ENCODE measurements at regions of chr20 and their contacts with region 1.

Region 1: GRCh38 chr20:45971675-45972499 is at the start of gene ZNF335:
- DNase-seq: peak; percentile 76 to 97
- H3K4me3 ChIP-seq: peak within 1 kb of the TSS; percentile 73 to 99
- H3K27ac ChIP-seq: peak within 1 kb of the TSS; percentile 99
- H3K4me1 ChIP-seq: peaks cover 3 to 30% of the 10 kb centered on the region in 2 donors
- H3K27me3 ChIP-seq: no peaks in the 10 kb centered on the region
- CTCF ChIP-seq: peak; percentile 37 to 48 (median 45)
- total RNA-seq, gene ZNF335: 27.8 TPM

Region 2: GRCh38 chr20:45406259-45407066 is 565.4 kb before region 1 on chr20:
- intact Hi-C with region 1: loop called (anchors 10 kb)
- DNase-seq: peak; percentile 38 to 90
- H3K4me3 ChIP-seq: peak overlapping the region; percentile 81 to 98
- H3K27ac ChIP-seq: peak overlapping the region; percentile 95 to 99
- H3K4me1 ChIP-seq: peaks cover 9 to 20% of the 10 kb centered on the region in 2 donors
- H3K27me3 ChIP-seq: no peaks in the 10 kb centered on the region
- CTCF ChIP-seq: no peak

Region 3: GRCh38 chr20:45857114-45857881 is 114.6 kb before region 1 on chr20 and contains the starts of genes ACOT8 and ZSWIM3:
- intact Hi-C with region 1: loop called (anchors 1 kb)
- DNase-seq: peak; percentile 96 to 99
- H3K4me3 ChIP-seq: peak within 1 kb of the TSS; percentile 95 to 96
- H3K27ac ChIP-seq: peak within 1 kb of the TSS; percentile 62 to 75
- H3K4me1 ChIP-seq: peaks cover 3 to 29% of the 10 kb centered on the region in 2 donors
- H3K27me3 ChIP-seq: no peaks in the 10 kb centered on the region
- CTCF ChIP-seq: no peak
- total RNA-seq, gene ACOT8: 34.4 TPM
- total RNA-seq, gene ZSWIM3: 6.8 TPM

Region 4: DNA sequence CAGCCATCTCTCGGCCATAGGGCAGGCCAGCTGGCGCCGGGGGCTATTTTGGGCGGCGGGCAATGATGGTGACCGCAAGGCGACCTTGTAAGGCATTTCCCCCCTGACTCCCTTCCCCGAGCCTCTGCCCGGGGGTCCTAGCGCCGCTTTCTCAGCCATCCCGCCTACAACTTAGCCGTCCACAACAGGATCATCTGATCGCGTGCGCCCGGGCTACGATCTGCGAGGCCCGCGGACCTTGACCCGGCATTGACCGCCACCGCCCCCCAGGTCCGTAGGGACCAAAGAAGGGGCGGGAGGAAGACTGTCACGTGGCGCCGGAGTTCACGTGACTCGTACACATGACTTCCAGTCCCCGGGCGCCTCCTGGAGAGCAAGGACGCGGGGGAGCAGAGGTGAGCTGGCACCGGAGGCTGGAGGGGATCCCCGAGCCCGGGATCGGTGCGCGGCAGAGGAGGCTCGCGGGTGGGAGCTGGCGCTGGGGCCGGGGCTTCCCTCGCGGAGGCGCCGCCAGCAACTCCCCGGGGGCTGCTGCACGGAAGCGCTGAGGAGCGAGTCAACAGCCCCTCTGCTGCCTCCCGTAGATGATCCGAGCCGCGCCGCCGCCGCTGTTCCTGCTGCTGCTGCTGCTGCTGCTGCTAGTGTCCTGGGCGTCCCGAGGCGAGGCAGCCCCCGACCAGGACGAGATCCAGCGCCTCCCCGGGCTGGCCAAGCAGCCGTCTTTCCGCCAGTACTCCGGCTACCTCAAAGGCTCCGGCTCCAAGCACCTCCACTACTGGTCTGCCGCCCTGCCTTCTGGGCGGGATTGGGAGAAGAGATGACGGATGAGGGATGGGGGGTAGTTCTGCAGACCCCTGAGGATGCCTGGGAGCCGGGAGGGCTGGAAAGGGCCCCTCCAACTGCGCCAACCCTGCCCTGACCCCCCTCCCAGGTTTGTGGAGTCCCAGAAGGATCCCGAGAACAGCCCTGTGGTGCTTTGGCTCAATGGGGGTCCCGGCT is 80.6 kb before region 1 on chr20 and contains the starts of genes CTSA and NEURL2:
- intact Hi-C with region 1: loop called (anchors 1 kb)
- DNase-seq: peak; percentile 76 to 96
- H3K4me3 ChIP-seq: peak within 1 kb of the TSS; percentile 71 to 87
- H3K27ac ChIP-seq: peak within 1 kb of the TSS; percentile 68 to 71
- H3K4me1 ChIP-seq: peaks cover 8 to 12% of the 10 kb centered on the region in 2 donors
- H3K27me3 ChIP-seq: no peaks in the 10 kb centered on the region
- CTCF ChIP-seq: no peak
- total RNA-seq, gene CTSA: 82.0 TPM
- total RNA-seq, gene NEURL2: 4.0 TPM

Region 5: GRCh38 chr20:46089417-46090388 is 117.8 kb after region 1 on chr20 and contains the start of gene NCOA5:
- intact Hi-C with region 1: loop called (anchors 1 kb)
- DNase-seq: peak; percentile 76 to 97
- H3K4me3 ChIP-seq: peak within 1 kb of the TSS; percentile 75 to 97
- H3K27ac ChIP-seq: peak within 1 kb of the TSS; percentile 99
- H3K4me1 ChIP-seq: peaks cover 3 to 36% of the 10 kb centered on the region in 2 donors
- H3K27me3 ChIP-seq: no peaks in the 10 kb centered on the region
- CTCF ChIP-seq: peak in 1 of 3 experiments; percentile 27
- total RNA-seq, gene NCOA5: 70.4 TPM

Region 6: DNA sequence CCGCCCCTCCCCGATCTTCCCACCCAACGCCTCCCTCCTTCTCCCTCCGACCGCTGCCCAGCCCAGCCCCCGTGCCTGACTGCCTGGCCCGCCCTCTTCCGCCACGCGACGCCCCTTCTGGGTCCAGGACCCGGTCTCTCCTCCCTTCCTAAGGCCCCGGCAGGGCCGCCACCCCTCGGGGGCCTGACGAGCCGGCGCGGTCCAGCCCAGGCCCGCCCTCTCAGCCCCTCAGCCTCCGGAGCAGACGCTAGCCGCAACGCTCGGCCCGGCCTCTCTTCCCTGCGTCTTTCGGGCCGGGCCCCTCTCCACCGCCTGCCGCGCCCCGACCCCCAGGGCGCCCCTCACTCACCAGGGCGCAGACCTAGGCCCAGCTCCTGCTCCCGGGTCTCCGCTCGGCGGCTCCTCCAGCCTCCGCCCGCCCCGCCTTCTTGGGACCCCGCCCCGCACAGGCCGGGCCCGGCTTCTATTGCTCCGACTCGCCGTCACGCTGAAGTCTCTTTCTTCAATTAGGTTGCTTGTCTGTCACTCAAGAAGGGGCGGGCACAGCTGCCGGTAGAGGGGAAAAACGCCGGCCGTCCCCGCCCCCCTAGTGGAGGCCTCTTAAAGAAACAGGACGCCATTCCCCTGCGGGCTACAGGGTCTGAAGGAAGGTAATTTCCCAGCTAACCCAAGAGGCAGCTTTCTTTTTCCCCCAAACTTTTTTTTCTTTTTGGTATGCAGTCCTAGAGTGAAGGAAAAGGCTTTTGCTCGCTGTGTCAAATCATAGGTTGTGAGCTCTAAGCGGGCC is 434.5 kb after region 1 on chr20 and contains the start of gene ELMO2:
- intact Hi-C with region 1: loop called (anchors 1 kb)
- DNase-seq: peak; percentile 94 to 99
- H3K4me3 ChIP-seq: peak within 1 kb of the TSS; percentile 87 to 88
- H3K27ac ChIP-seq: peak within 1 kb of the TSS; percentile 95 to 98
- H3K4me1 ChIP-seq: peaks cover 24 to 58% of the 10 kb centered on the region in 2 donors
- H3K27me3 ChIP-seq: no peaks in the 10 kb centered on the region
- CTCF ChIP-seq: peak in 2 of 3 experiments; percentile 17 to 30
- total RNA-seq, gene ELMO2: 77.5 TPM

Measured in ascending aorta (tissue), 2 donors.